ENCODE measurements at regions of chr10 and their contacts with region 1.

Region 1: DNA sequence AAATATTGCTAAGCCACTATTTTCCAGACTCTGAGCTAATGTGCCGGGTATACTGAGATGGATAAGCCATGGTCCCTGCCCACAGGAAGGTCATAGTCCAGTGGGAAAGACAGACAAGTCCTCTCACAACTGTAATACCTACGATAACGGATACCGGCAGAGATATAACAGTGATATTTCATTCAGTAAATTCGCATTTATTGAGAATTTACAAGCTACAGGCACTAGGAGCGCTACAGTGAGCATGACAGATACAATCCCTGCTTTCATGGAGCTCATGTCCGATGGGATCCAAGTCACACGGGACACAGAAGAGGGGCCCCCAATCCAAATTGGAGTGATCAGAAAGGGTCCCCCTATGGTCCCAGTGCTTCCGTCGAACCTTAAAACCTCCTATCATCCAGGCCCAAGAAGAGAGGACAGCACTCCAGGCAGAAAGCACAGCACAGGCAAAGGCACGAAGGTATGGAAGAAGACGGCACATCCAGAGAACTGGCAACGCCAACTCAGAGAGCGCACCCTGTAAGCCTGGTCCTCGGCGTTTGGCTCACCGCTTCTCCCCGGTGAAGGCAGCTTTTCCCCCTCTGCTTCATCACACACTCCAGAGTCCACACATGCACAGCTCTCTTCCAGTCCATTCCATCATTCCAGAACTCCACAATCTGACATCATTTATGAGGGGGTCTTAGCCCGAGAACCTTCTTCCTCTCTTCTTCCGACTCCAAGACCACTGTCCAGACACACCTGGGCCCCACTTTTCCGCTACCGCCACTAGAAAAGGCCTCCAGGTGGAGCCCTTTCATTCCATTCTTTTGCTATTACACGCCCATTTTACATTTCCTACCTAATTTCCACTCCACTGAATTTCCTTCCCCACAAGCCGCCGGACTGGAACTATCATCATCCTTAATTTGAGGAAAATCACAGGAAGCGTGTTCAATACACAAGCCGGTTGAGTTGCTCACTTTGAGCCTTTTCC is 47.9 kb upstream of the NKX2-3 start:
- H3K4me3 ChIP-seq: no peak overlapping the region
- H3K27ac ChIP-seq: no peak overlapping the region
- H3K4me1 ChIP-seq: no peaks in the 10 kb centered on the region
- CTCF ChIP-seq: no peak; the same call in 1 of the 2 replicates

Region 2: DNA sequence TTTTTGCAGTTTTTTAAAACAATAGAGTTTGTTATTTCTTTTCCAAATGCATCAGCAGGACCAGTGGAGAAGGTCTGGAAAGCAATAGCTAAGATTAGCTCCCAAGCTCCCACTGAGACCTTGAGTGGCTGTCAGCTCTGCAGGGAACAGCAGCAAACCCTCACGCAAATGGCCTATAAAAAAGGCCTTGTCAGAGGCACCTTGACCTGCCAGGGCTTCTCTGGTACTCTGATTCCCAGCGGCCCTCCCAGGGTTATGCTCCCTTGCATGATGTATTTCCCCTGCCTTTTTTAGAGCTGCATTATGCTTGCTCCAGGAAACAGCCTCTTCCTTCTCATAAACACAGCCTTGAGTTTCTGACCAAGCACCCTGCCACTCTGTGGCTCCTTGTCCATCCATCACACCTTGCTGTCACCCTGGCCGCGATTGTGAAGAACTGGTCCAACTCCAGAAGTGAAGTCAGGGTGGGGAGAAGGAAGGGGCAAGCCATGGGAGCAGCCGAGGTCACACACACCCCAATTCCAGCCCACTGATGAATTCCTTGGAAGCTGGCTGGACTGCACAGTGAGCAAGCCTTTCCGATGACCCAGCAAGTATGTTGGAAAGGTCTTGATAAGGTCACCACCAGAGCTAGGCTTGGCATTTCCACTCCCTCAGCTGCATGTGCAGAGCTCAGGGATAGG is 12.6 kb after region 1 on chr10:
- CTCF ChIA-PET with region 1: interaction called, 14 read pairs
- POLR2A ChIA-PET with region 1: interaction called, 8 read pairs
- H3K4me3 ChIP-seq: no peak overlapping the region
- H3K27ac ChIP-seq: no peak overlapping the region
- H3K4me1 ChIP-seq: no peaks in the 10 kb centered on the region
- CTCF ChIP-seq: no peak

Region 3: GRCh38 chr10:99548041-99548530 is 63.2 kb after region 1 on chr10:
- CTCF ChIA-PET with region 1: interaction called, 17 read pairs
- POLR2A ChIA-PET with region 1: no interaction called
- H3K4me3 ChIP-seq: no peak overlapping the region
- H3K27ac ChIP-seq: no peak overlapping the region
- H3K4me1 ChIP-seq: peaks cover 14% of the 10 kb centered on the region
- CTCF ChIP-seq: peak; percentile 62; the same call in 1 of the 2 replicates